ENCODE measurements at regions of chr2 and their contacts with region 1.

Region 1: GRCh38 chr2:118032169-118033013 is 18.5 kb upstream of the CCDC93 start:
- DNase-seq: peak; percentile 65
- ATAC-seq: peak; percentile 81
- H3K4me3 ChIP-seq: no peak overlapping the region
- H3K4me3 Mint-ChIP-seq: no peak overlapping the region
- H3K27ac ChIP-seq: no peak overlapping the region
- H3K27ac Mint-ChIP-seq: no peak overlapping the region
- H3K4me1 ChIP-seq: peaks cover 8 to 9% of the 10 kb centered on the region in 2 donors
- H3K4me1 Mint-ChIP-seq: peaks cover 9% of the 10 kb centered on the region
- H3K27me3 ChIP-seq: peaks cover 0 to 16% (median 9%) of the 10 kb centered on the region in 4 experiments
- H3K27me3 Mint-ChIP-seq: peaks cover 44% of the 10 kb centered on the region
- CTCF ChIP-seq: peak; percentile 85

Region 2: DNA sequence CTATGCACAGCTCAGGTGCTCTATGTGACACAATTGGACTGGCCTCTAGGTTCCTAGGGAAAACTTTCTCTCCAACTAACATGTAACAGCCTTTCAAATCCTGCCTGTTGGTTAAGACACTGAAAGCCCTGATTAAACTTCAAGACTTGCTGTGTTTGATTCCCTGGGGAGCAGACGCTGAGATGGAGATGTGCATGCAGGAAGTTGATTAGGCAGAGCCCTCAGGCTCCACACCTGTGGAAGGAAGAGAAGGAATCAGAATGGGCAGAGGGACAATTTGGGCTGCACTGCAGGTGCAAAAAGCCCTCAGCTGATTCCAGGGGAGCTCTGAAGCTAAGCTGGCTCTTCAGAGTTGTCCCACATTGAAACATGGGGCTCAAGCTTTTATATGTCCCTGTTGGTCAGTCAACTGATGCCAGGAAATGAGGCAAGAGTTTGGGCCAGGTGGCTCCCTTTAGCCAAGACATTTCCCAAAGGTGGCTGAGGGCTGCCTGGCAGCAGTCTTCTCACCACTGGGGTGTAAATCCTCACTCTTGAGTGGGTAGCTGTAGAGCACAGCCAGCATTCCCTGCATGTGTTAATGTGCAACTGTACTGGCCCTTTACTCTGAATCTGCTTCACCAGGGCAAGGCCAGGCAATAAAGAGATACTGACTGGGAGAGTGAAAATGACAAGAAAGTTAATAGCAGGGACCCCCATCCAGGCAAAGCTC is 417.4 kb before region 1 on chr2:
- CTCF ChIA-PET with region 1: no interaction called
- POLR2A ChIA-PET with region 1: no interaction called
- intact Hi-C with region 1: no loop called
- DNase-seq: no peak
- ATAC-seq: no peak
- H3K4me3 ChIP-seq: no peak overlapping the region
- H3K4me3 Mint-ChIP-seq: no peak overlapping the region
- H3K27ac ChIP-seq: no peak overlapping the region
- H3K27ac Mint-ChIP-seq: no peak overlapping the region
- H3K4me1 ChIP-seq: no peaks in the 10 kb centered on the region
- H3K4me1 Mint-ChIP-seq: no peaks in the 10 kb centered on the region
- H3K27me3 ChIP-seq: no peaks in the 10 kb centered on the region
- H3K27me3 Mint-ChIP-seq: no peaks in the 10 kb centered on the region
- CTCF ChIP-seq: no peak

Region 3: DNA sequence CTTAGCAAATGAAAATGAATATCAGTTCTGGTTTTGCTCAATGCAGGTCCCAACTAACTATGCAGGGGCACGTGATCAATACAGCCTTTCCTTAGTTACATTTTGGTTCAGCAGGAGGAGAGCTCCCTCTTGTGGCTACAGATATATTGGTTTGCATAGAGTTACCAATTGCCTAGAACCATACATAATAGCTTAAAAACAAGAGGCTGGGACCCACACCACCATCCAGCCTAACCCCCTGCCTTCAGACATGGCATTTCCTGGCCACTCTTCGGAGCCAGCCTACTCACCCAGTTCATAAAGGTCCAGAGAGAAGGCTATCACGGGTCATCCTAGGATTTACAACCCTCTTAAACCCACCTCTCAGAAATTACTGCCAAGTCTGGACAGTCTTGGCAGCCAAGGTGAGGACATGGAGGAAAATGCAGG is 29.0 kb before region 1 on chr2:
- CTCF ChIA-PET with region 1: interaction called, 13 read pairs
- POLR2A ChIA-PET with region 1: no interaction called
- intact Hi-C with region 1: no loop called
- DNase-seq: peak; percentile 86
- ATAC-seq: peak; percentile 94
- H3K4me3 ChIP-seq: no peak overlapping the region
- H3K4me3 Mint-ChIP-seq: no peak overlapping the region
- H3K27ac ChIP-seq: peak overlapping the region in 1 of 2 donors; percentile 15
- H3K27ac Mint-ChIP-seq: peak overlapping the region; percentile 73
- H3K4me1 ChIP-seq: peaks cover 7 to 8% of the 10 kb centered on the region in 2 donors
- H3K4me1 Mint-ChIP-seq: peaks cover 7% of the 10 kb centered on the region
- H3K27me3 ChIP-seq: no peaks in the 10 kb centered on the region
- H3K27me3 Mint-ChIP-seq: no peaks in the 10 kb centered on the region
- CTCF ChIP-seq: peak; percentile 91

Region 4: DNA sequence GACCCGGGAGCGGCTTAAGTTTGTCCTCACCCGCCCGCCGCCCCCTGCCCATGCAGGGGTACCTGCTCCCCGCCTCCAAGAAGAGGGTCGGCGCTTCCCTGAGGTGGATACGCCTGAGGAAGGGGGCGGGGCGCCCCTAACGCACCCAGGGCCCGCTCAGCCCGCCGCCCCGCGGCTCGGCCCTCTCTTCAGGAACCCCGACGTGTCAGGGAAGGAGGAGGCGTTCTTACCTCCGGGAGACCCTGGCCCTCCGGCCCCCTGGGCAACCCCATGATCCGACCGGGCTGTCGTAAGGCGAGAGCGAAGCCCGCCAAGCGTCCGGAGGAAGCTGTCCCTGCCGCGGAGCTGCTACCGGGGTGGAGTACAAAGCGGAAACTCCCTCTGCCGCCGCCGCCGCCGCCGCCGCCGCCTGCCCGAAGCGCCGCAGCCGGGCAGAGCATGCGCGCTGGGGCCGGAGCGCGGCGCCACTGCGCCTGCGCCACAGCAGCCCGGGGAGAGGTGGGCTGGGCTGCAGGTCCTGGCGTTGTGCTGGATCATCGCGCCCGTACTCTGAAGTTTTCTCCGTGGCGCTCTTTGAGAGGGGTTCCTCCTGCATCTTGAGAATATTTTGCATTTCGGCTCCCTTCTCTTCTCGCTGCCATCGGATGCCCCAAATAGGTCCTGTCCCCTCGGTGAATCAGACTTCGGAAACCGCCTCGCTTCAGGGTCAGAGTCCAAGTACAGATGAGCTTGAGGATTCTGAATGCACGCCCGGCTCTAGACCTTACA is 18.5 kb before region 1 on chr2 and contains the start of gene CCDC93:
- CTCF ChIA-PET with region 1: interaction called, 20 read pairs
- POLR2A ChIA-PET with region 1: no interaction called
- intact Hi-C with region 1: loop called (anchors 2 kb)
- DNase-seq: peak; percentile 94
- ATAC-seq: peak; percentile 86
- H3K4me3 ChIP-seq: peak within 1 kb of the TSS; percentile 82 to 99 (median 96)
- H3K4me3 Mint-ChIP-seq: peak within 1 kb of the TSS; percentile 97
- H3K27ac ChIP-seq: peak within 1 kb of the TSS; percentile 90 to 97
- H3K27ac Mint-ChIP-seq: peak within 1 kb of the TSS; percentile 92
- H3K4me1 ChIP-seq: peaks cover 21 to 24% of the 10 kb centered on the region in 2 donors
- H3K4me1 Mint-ChIP-seq: peaks cover 34% of the 10 kb centered on the region
- H3K27me3 ChIP-seq: peaks cover 0 to 9% (median 0%) of the 10 kb centered on the region in 4 experiments
- H3K27me3 Mint-ChIP-seq: peaks cover 9% of the 10 kb centered on the region
- CTCF ChIP-seq: no peak
- total RNA-seq, gene CCDC93: 79.6 and 86.7 TPM in 2 replicates

Region 5: GRCh38 chr2:118056165-118056534 is 23.8 kb after region 1 on chr2:
- CTCF ChIA-PET with region 1: interaction called, 784 read pairs
- POLR2A ChIA-PET with region 1: no interaction called
- intact Hi-C with region 1: loop called (anchors 1 kb)
- DNase-seq: peak; percentile 86
- ATAC-seq: peak; percentile 91
- H3K4me3 ChIP-seq: peak overlapping the region in 2 of 5 experiments; percentile 16 to 22
- H3K4me3 Mint-ChIP-seq: peak overlapping the region; percentile 80
- H3K27ac ChIP-seq: peak overlapping the region; percentile 67 to 88
- H3K27ac Mint-ChIP-seq: peak overlapping the region; percentile 98
- H3K4me1 ChIP-seq: peaks cover 52 to 63% of the 10 kb centered on the region in 2 donors
- H3K4me1 Mint-ChIP-seq: peaks cover 60% of the 10 kb centered on the region
- H3K27me3 ChIP-seq: no peaks in the 10 kb centered on the region
- H3K27me3 Mint-ChIP-seq: no peaks in the 10 kb centered on the region
- CTCF ChIP-seq: no peak

Region 6: GRCh38 chr2:118061135-118061955 is 29.0 kb after region 1 on chr2:
- CTCF ChIA-PET with region 1: interaction called, 784 read pairs
- POLR2A ChIA-PET with region 1: no interaction called
- intact Hi-C with region 1: loop called (anchors 1 kb)
- DNase-seq: peak; percentile 72
- ATAC-seq: peak; percentile 84
- H3K4me3 ChIP-seq: no peak overlapping the region
- H3K4me3 Mint-ChIP-seq: peak overlapping the region; percentile 10
- H3K27ac ChIP-seq: no peak overlapping the region
- H3K27ac Mint-ChIP-seq: peak overlapping the region; percentile 60
- H3K4me1 ChIP-seq: peaks cover 33 to 45% of the 10 kb centered on the region in 2 donors
- H3K4me1 Mint-ChIP-seq: peaks cover 43% of the 10 kb centered on the region
- H3K27me3 ChIP-seq: peaks cover 0 to 5% (median 0%) of the 10 kb centered on the region in 4 experiments
- H3K27me3 Mint-ChIP-seq: peaks cover 13% of the 10 kb centered on the region
- CTCF ChIP-seq: peak; percentile 79

Region 7: DNA sequence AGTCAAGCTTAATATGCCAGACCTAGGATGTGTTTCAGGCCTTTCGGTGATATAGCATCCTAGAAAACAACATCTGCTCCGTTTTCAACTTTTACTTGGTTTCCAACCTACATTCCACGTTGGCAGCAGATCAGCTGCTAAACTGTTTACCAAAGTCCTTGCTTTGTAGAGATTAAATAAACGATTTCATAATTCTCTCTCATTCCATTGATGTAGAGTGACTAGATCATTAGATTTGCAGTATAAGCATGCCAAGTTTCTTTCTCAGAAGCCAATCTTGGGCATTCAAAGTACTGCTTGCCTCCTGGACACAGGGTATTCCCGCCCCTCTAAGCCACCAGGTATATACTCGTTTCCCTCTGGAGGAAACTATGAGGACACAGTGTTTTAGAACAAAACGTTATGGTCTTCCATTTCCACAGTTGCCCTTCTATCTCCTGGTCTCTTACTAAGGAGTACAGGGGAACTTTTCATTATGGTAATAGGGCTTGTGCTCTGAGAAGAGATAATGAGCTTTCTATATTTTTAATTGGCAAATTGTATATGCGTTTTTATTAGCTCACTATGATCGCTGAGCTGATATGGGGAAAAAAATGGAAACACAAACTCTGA is 45.4 kb after region 1 on chr2:
- CTCF ChIA-PET with region 1: interaction called, 784 read pairs
- POLR2A ChIA-PET with region 1: no interaction called
- intact Hi-C with region 1: loop called (anchors 5 kb)
- DNase-seq: no peak
- ATAC-seq: no peak
- H3K4me3 ChIP-seq: no peak overlapping the region
- H3K4me3 Mint-ChIP-seq: no peak overlapping the region
- H3K27ac ChIP-seq: no peak overlapping the region
- H3K27ac Mint-ChIP-seq: no peak overlapping the region
- H3K4me1 ChIP-seq: no peaks in the 10 kb centered on the region
- H3K4me1 Mint-ChIP-seq: no peaks in the 10 kb centered on the region
- H3K27me3 ChIP-seq: peaks cover 0 to 10% (median 0%) of the 10 kb centered on the region in 4 experiments
- H3K27me3 Mint-ChIP-seq: peaks cover 72% of the 10 kb centered on the region
- CTCF ChIP-seq: no peak

Region 8: GRCh38 chr2:118348380-118349034 is 316.1 kb after region 1 on chr2:
- CTCF ChIA-PET with region 1: no interaction called
- POLR2A ChIA-PET with region 1: no interaction called
- intact Hi-C with region 1: no loop called
- DNase-seq: no peak
- ATAC-seq: no peak
- H3K4me3 ChIP-seq: no peak overlapping the region
- H3K4me3 Mint-ChIP-seq: no peak overlapping the region
- H3K27ac ChIP-seq: no peak overlapping the region
- H3K27ac Mint-ChIP-seq: no peak overlapping the region
- H3K4me1 ChIP-seq: no peaks in the 10 kb centered on the region
- H3K4me1 Mint-ChIP-seq: no peaks in the 10 kb centered on the region
- H3K27me3 ChIP-seq: peaks cover 0 to 3% (median 0%) of the 10 kb centered on the region in 4 experiments
- H3K27me3 Mint-ChIP-seq: peaks cover 31% of the 10 kb centered on the region
- CTCF ChIP-seq: no peak